ENCODE measurements at regions of chr7 and their contacts with region 1.

Region 1: DNA sequence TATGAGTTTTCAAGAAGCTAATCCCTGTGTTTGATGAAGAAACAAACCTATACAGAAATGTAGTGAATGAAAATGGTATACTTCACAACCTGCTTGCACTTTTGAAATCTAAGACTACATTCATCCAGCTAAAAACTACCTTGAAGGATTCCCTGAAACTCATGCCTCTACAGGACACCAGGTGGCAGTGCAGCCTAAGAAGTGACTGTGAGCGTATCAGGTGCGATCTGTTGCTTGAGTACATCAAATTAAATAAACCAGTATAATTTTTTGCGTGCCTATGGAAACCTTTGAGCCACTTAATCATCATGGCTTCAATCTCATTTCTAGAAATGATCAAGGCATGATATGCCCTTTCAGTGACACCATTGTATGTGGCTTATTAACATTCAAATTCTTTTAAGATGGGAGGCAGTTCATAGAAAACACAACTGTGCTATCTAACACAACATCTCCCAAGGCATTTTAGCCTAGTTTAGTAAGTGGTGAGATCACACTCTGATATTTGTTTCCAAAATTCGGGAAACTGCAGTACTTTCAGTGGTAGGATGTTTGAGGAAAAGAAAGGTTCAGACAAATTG is 57.4 kb downstream of the PPP1R17 start:
- DNase-seq: peak; percentile 60
- ATAC-seq: peak; percentile 72 to 77

Region 2: DNA sequence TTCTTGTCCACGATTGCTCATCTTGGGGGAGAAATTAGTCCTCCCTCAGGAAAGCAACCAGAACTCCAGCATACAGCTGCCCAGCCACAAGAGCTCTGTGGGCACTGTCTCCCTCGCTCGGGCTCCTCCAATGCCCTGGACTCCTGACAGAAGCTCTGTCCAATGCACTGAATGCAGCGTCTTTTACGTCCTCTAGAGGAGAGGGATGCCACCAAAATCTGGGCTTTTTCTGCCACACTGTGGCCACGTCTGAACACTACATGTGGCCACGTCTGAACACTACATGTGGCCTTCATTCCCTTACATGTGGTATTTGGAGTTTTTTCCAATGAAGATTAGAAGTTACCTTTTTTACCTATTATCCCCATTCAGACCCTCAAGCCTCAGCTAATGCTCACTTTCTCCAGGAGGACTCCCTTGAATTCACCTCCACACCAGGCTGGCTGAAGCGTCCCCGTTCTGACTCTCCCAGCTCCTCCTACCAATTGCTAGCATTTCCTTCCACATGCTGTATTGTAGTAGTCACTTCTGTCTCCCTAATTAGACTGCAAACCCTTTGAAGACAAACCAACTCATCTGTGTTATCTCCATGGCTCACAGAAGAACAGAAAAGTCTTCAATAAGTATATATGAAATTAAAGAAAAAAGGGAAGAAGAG is 460.1 kb after region 1 on chr7:
- intact Hi-C with region 1: loop called (anchors 2 to 5 kb)
- DNase-seq: peak; percentile 73
- ATAC-seq: peak; percentile 96 to 97

Region 3: GRCh38 chr7:32347244-32347828 is 603.0 kb after region 1 on chr7:
- intact Hi-C with region 1: loop called in 1 of 2 experiments (anchors 10 kb)
- DNase-seq: no peak
- ATAC-seq: no peak

Region 4: DNA sequence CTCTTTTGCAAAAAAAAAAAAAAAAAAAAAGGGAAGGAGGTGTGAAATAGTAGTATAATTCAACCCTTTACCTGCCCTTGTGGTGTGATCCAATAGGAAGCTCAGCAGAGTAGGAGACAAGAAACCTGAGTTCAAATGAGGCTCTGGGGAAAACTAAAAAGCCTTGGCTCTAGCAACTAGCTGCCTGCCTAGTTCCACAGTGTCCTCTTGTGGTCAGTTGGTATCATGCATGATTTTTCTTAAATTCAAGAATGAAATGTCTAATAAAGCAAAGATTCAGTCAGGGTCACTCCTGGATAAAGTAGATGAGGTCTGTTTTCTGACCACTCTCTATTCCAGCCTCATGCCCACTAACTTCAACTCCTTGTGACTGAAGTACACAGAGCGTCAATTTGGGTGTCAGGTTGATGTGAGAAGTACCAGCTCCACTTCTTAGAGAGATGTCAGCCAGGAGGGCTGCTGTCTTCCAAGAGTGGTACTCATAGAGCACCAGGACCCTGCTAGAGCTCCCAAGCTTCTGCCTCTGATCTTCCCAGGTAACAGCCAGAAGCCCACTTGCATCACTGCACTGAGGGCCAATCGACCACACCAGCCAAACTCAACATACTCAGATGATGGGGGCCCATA is 735.3 kb after region 1 on chr7:
- intact Hi-C with region 1: loop called in 1 of 2 experiments (anchors 5 kb)
- DNase-seq: no peak
- ATAC-seq: peak in 1 of 2 donors; percentile 29

Measured in left cardiac atrium (tissue), 4 donors.